ENCODE measurements at regions of chr14 and their contacts with region 1.

Region 1: GRCh38 chr14:64569184-64569631 is 19.4 kb downstream of the PPP1R36 start:
- DNase-seq: peak; percentile 88
- H3K4me3 ChIP-seq: no peak overlapping the region
- H3K27ac ChIP-seq: peak overlapping the region; percentile 74 to 84 (median 81)
- H3K4me1 ChIP-seq: peaks cover 0 to 70% (median 62%) of the 10 kb centered on the region in 4 donors
- H3K27me3 ChIP-seq: no peaks in the 10 kb centered on the region
- CTCF ChIP-seq: no peak
- EP300 ChIP-seq: peak in 1 of 4 donors; percentile 66
- POLR2A ChIP-seq: no peak

Region 2: DNA sequence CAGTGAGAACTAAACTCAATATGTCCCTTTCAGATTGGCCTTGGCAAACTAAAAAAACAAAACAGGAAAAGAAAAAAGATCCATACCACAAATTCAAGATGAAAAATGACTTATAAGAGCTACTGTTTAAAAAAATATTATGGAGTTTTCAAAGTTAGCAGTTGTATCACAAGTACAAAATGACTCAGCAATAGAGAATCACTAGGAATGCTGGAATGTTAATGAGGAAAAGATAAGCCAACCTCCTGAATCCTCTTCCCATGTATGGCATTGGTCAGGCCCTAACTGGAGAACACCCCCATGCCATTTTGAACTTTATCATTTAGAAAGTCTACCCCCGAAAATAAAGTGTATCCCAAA is 42.8 kb after region 1 on chr14:
- intact Hi-C with region 1: loop called (anchors 5 kb)
- DNase-seq: no peak
- H3K4me3 ChIP-seq: no peak overlapping the region
- H3K27ac ChIP-seq: peak overlapping the region; percentile 62 to 81 (median 78)
- H3K4me1 ChIP-seq: peaks cover 0 to 48% (median 30%) of the 10 kb centered on the region in 4 donors
- H3K27me3 ChIP-seq: no peaks in the 10 kb centered on the region
- CTCF ChIP-seq: no peak
- EP300 ChIP-seq: no peak
- POLR2A ChIP-seq: no peak

Region 3: DNA sequence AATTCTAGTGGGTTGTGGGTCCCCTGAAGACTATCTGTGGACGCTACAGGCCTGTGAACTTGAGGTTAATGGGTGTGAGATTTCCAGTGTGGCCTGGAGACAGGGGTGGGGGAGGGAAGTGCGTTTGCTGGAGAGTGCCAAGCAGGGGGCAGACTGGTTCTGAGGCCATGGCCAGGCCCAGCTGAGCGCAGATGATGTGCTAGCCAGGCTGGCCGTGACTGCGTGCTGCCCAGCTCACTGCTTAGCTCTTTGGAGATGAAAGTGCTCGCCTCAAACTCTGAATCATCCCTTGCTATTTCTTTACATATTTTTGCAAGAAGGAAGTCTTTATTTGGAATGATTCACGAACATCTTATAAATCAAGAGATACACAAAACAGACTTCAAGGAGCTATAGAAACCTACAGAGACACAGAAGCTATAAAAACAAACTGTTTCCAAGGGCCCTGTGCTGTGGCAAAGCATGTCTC is 59.8 kb after region 1 on chr14:
- intact Hi-C with region 1: loop called (anchors 5 kb)
- DNase-seq: peak; percentile 87
- H3K4me3 ChIP-seq: no peak overlapping the region
- H3K27ac ChIP-seq: peak overlapping the region; percentile 76 to 88 (median 84)
- H3K4me1 ChIP-seq: peaks cover 0 to 63% (median 49%) of the 10 kb centered on the region in 4 donors
- H3K27me3 ChIP-seq: no peaks in the 10 kb centered on the region
- CTCF ChIP-seq: no peak
- EP300 ChIP-seq: peak in 2 of 4 donors; percentile 59 to 82
- POLR2A ChIP-seq: no peak

Region 4: DNA sequence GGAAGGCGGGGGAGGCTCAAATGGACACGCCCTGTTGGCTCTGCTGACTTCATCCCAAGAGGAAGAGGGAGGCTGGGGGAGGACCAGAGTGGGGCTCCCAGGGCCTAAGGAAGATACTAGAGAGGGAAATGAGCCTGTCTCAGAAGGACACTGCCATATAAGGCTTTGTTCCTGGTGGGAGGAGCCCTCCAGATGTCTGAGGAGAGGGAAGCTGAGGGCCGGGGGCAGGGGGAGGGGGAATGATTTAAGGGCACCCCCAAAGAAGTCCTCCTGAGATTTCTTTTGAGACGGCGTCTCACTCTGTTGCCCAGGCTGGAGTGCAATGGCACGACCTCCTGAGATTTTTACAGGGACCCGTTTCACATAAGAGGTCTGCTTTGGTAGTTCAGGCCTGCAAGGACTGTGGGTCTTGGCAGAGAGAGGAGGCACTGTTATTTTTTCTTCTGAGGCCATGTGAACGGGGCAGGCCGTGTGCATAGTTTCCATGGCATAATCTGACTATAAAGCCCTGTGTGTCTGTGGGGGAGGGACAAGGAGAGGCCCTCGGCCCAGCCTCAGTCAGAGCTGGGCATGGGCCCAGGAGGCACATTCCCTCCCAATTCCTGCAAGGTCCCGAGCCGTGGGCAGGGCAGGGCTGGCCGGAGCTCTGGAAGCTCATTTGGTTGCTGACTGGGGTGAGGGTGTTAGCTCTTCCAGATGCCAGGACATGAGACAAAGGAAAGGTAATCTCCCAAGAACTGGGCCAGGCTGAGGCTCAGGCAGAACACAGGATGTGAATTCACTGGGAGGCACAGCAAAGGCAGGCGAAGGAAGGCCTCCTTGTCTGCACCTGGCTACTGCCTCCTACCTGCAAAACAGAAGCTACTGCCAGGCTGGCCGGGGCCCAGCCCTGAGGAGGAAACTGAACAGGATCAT is 112.8 kb after region 1 on chr14:
- intact Hi-C with region 1: no loop called
- DNase-seq: peak; percentile 88
- H3K4me3 ChIP-seq: no peak overlapping the region
- H3K27ac ChIP-seq: peak overlapping the region; percentile 83 to 90 (median 87)
- H3K4me1 ChIP-seq: peaks cover 0 to 50% (median 47%) of the 10 kb centered on the region in 4 donors
- H3K27me3 ChIP-seq: no peaks in the 10 kb centered on the region
- CTCF ChIP-seq: no peak
- EP300 ChIP-seq: peak in 2 of 4 donors; percentile 13 to 74
- POLR2A ChIP-seq: peak in 1 of 2 donors; percentile 30